A673 (cell line): ENCODE measurements at regions of chr6 and their contacts with region 1.

Region 1: GRCh38 chr6:38871741-38872568 is 156.8 kb downstream of the DNAH8 start:
- DNase-seq: peak; percentile 70
- H3K4me3 ChIP-seq: no peak overlapping the region
- H3K27ac ChIP-seq: no peak overlapping the region
- H3K4me1 ChIP-seq: no peaks in the 10 kb centered on the region
- H3K27me3 ChIP-seq: peaks cover 6% of the 10 kb centered on the region
- CTCF ChIP-seq: peak; percentile 96

Region 2: GRCh38 chr6:38796006-38796405 is 75.9 kb before region 1 on chr6:
- CTCF ChIA-PET with region 1: no interaction called
- POLR2A ChIA-PET with region 1: no interaction called
- intact Hi-C with region 1: no loop called
- DNase-seq: no peak
- H3K4me3 ChIP-seq: no peak overlapping the region
- H3K27ac ChIP-seq: no peak overlapping the region
- H3K4me1 ChIP-seq: no peaks in the 10 kb centered on the region
- H3K27me3 ChIP-seq: no peaks in the 10 kb centered on the region
- CTCF ChIP-seq: no peak

Region 3: GRCh38 chr6:38933432-38933831 is 61.5 kb after region 1 on chr6:
- CTCF ChIA-PET with region 1: interaction called, 9 read pairs
- POLR2A ChIA-PET with region 1: no interaction called
- intact Hi-C with region 1: loop called (anchors 2 kb)
- DNase-seq: peak; percentile 25
- H3K4me3 ChIP-seq: no peak overlapping the region
- H3K27ac ChIP-seq: no peak overlapping the region
- H3K4me1 ChIP-seq: no peaks in the 10 kb centered on the region
- H3K27me3 ChIP-seq: peaks cover 19% of the 10 kb centered on the region
- CTCF ChIP-seq: peak; percentile 46